ENCODE measurements at regions of chr11 and their contacts with region 1.

Region 1: DNA sequence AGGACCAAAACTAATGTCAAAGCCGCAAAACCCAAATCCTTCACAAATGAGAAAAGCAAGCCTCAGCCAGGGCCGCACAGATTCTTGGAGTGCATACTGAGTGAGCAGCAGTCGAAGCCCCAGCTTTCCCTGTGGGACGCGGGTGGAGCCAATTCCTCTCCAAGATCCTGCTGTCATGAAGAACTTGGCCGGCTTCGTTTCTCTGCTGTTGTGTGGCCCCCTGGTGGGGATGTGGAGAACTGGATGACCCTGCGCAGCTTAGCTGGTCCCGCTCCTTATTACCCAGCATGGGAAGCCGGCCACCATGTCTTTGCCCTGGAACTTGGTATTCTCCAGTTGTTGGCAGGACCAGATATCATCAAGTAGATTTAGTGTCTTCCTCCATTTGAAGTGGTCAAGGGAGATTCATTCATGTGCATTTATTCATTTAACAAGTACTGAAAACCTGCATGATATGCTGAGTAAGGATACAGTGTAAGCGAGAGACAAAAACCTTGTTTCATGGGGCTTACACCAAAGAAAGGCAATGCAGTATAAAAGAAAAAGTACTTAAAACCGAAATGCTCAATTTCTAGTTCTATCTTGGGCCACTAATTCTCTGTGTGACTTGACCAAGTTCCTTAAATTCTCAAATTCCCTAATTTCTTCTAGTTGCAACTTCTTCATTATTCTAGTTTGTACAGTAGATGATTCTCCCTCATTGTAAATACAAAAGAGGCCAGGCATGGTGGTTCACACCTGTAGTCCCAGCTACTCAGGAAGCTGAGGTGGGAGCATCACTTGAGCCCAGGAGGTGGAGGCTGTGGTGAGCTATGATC is 56.7 kb upstream of the CRTAM start:
- DNase-seq: peak; percentile 91
- H3K4me3 Mint-ChIP-seq: no peak overlapping the region
- H3K27ac Mint-ChIP-seq: no peak overlapping the region
- H3K4me1 Mint-ChIP-seq: peaks cover 16% of the 10 kb centered on the region
- H3K27me3 Mint-ChIP-seq: no peaks in the 10 kb centered on the region

Region 2: DNA sequence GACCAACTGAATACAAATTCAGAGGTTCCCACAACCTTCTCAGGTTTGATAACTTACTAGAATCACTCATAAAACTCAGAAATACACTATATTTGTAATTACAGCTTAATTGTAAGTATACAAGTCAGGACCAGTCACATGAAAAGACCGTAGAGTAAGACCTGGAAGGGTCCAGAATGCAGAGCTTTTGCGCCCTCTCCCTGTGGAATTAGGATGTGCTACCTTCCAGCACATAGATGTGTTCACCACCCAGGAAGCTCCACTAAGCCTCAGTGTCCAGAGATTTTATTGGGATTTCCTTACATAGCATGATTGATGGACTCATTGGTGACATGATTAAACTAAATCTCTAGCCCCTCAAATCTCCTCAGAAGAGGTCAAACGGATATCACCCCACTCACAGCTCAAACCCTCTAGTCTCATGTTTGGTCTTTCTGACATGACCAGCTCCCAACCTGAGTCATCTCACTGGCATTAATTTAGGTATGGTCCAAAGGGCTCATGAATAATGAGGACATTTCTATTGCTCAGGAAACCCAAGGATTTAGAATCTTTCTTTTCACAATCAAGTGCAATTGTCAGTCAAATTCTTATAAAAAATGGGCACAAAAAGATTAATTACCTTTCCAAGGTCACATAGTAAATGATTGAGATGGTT is 203.3 kb before region 1 on chr11:
- intact Hi-C with region 1: loop called (anchors 1 kb)
- DNase-seq: no peak
- H3K4me3 Mint-ChIP-seq: no peak overlapping the region
- H3K27ac Mint-ChIP-seq: no peak overlapping the region
- H3K4me1 Mint-ChIP-seq: peaks cover 7% of the 10 kb centered on the region
- H3K27me3 Mint-ChIP-seq: no peaks in the 10 kb centered on the region

Region 3: DNA sequence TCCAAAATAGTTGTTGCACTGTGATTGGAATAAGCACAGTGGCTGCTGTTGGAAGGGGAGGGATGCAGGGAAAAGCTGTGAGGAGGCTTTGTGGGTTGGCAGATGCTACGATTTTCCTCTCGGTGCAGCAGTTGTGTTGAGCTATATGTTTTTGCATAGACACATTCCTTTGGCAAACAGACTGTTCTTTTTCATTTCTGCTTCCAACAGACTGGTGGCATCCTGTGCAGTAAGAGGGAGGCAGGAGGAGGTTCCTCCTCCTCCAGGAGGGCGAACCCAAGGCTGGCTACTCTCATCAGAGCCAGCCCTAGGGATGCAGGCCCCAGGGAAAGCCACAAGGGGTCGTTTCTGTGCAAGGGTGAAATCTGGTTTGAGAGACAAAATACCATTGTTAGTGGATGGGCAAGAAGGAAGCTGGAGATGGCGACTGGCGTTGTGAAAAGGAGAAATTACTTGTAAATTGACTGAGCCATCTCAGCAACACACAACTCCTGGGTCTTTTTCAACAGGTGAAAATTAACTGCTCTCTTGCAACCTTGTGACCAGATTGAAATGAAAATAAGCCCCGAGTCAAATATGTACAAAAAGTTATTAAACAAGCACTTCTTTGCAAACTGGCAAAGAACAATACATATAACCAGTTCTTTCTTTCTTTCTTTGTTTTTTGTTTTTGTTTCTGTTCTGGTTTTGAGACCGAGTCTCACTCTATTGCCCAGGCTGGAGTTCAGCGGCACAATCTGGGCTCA is 152.6 kb before region 1 on chr11:
- intact Hi-C with region 1: loop called (anchors 1 kb)
- DNase-seq: peak; percentile 88
- H3K4me3 Mint-ChIP-seq: no peak overlapping the region
- H3K27ac Mint-ChIP-seq: no peak overlapping the region
- H3K4me1 Mint-ChIP-seq: no peaks in the 10 kb centered on the region
- H3K27me3 Mint-ChIP-seq: peaks cover 20% of the 10 kb centered on the region

Region 4: GRCh38 chr11:122754553-122755322 is 26.8 kb before region 1 on chr11:
- intact Hi-C with region 1: loop called (anchors 2 kb)
- DNase-seq: peak; percentile 82
- H3K4me3 Mint-ChIP-seq: no peak overlapping the region
- H3K27ac Mint-ChIP-seq: no peak overlapping the region
- H3K4me1 Mint-ChIP-seq: peaks cover 41% of the 10 kb centered on the region
- H3K27me3 Mint-ChIP-seq: peaks cover 17% of the 10 kb centered on the region

Measured in activated CD4-positive, alpha-beta T cell treated with anti-CD3 and anti-CD28 coated beads, Interleukin-2, amount 10 ng/mL, durations not matched to agents 24 days and 14 days (primary cell).